ENCODE measurements at regions of chr22 and their contacts with region 1.

Region 1: GRCh38 chr22:30968924-30969539 is at the start of gene TUG1:
- DNase-seq: peak; percentile 97 to 99 (median 98)
- H3K4me3 ChIP-seq: peak within 1 kb of the TSS; percentile 62 to 98 (median 89)
- H3K27ac ChIP-seq: peak within 1 kb of the TSS; percentile 82 to 99 (median 94)
- H3K27me3 ChIP-seq: no peaks in the 10 kb centered on the region
- CTCF ChIP-seq: peak in 25 of 56 donors; percentile 6 to 54 (median 25)
- total RNA-seq, gene TUG1: 56.3 to 90.8 (median 71.5) TPM

Region 2: DNA sequence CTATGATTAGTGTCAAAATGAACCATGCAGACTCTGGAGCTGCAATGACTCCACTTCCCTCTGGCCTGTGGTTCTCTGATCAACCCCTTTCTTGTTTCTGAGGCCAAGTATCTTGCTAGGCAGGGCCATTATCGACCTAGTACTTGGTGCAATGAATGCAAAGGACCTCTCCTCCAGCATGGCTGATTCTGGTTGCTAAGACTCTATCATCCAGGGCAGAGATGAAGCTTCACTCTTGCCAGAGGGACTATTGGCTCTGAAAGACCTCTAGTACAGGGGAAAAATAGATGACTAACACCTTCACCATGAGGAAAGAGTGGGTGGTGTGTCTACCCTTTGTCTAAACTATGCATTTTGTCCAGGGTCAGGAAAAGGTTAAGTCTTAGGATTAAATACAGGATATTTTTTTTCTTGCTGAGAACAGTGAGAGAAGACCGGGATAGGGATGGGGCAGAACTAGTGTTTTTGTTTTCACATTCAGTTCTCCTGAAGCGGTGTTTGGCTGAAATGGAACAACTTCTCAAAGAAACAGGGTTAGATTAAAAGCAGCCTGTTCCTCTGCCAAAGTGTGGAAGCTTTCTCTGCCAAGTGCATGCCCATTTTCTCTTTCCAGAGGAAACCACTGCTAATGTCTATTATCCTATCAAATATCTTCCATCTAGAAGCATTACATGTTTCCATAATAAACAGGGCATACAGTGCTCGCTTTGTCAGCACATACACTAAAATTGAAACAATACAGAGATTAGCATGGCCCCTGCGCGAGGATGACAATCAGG is 548.5 kb before region 1 on chr22:
- intact Hi-C with region 1: no loop called
- DNase-seq: no peak
- H3K4me3 ChIP-seq: no peak overlapping the region
- H3K27ac ChIP-seq: peak overlapping the region in 57 of 59 donors; percentile 2 to 100 (median 75)
- H3K27me3 ChIP-seq: no peaks in the 10 kb centered on the region
- CTCF ChIP-seq: no peak

Region 3: DNA sequence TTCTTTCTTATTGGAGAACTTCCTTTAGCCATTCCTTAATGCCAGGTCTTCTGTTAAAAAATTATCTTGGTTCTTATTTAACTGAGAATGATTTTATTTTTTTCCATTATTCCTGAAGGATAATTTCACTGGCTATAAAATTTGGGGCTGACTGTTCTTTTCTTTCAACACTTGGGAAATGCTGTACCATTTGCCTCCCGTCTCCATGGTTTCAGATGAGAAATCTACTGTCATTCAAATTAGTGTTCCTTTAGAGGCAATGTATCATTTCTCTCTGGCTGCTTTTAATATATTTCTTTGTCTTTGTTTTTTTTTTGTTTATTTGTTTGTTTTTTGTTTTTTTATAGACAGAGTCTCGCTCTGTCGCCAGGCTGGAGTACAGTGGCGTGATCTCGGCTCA is 60.2 kb after region 1 on chr22:
- intact Hi-C with region 1: no loop called
- DNase-seq: no peak
- H3K4me3 ChIP-seq: no peak overlapping the region
- H3K27ac ChIP-seq: no peak overlapping the region
- H3K27me3 ChIP-seq: no peaks in the 10 kb centered on the region
- CTCF ChIP-seq: no peak

Region 4: GRCh38 chr22:31080848-31081649 is 112.0 kb after region 1 on chr22 and contains the start of gene SMTN:
- intact Hi-C with region 1: loop called in 1 of 2 experiments (anchors 2 kb)
- DNase-seq: peak; percentile 56 to 84 (median 68)
- H3K4me3 ChIP-seq: peak within 1 kb of the TSS; percentile 34 to 87 (median 59)
- H3K27ac ChIP-seq: peak within 1 kb of the TSS in 43 of 59 donors; percentile 1 to 99 (median 47)
- H3K27me3 ChIP-seq: peaks cover 0 to 5% (median 0%) of the 10 kb centered on the region in 45 donors
- CTCF ChIP-seq: no peak
- total RNA-seq, gene SMTN: 12.5 to 186 (median 28.4) TPM

Region 5: DNA sequence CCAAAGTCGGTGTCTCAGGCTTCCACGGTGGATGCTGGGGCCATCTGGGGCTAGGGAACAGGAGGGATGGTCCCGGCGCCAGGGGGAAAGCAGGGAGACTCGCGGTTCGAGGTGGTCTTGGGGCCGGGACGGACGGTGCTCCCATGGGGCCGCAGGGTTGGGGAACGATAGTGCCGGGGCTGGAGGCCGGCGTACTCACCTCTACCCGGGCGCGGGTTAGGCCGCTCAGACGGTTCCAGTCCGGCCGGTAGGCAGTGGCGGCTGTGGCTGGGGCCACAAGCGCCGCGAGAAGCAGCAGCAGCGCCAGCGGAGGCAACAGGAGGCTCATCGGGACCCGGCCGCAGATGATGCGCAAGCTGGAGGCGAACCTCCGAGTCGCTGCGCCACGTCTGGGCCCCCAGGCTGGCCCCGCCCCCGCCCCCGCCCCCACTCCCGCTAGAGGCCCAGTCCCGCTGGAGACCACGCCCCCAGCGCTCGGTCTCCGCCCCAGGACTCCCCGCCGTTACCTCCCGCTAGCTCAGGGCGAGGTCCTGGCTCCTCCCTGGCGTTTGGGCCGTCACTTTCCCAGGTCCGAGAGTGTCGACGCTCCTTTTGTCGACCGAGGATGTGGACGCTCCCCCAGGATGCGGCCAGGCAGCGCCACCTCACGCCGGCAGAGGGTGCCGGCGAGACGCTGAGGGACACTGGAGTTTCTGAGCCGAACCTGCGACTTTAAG is 138.3 kb after region 1 on chr22 and contains the start of gene SELENOM:
- intact Hi-C with region 1: loop called in 1 of 2 experiments (anchors 5 kb)
- DNase-seq: peak; percentile 82 to 97 (median 93)
- H3K4me3 ChIP-seq: peak within 1 kb of the TSS; percentile 59 to 97 (median 88)
- H3K27ac ChIP-seq: peak within 1 kb of the TSS; percentile 7 to 97 (median 92)
- H3K27me3 ChIP-seq: no peaks in the 10 kb centered on the region
- CTCF ChIP-seq: peak; percentile 44 to 97 (median 86)
- total RNA-seq, gene SELENOM: 76.0 to 161 (median 116) TPM

Region 6: DNA sequence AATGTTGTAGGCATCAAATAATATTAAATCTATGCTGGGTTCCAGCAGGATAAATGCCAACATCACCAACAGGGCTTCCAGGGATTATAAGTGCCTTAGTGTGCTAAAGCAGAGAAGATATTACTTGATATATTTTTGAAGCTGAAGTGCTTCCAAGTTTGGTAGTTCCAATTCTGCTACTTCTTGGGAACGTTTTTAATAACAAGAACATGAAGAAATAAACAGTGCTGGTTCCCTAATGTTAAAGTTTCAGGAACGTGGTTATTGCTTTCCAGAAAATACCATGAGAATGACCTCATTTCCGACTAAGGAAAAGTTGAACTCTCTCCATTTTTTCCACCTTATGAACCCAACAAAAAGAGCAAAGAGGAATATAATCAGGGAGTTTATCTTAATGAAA is 186.4 kb after region 1 on chr22:
- intact Hi-C with region 1: loop called (anchors 5 to 10 kb)
- DNase-seq: no peak
- H3K4me3 ChIP-seq: no peak overlapping the region
- H3K27ac ChIP-seq: peak overlapping the region in 39 of 59 donors; percentile 0 to 78 (median 46)
- H3K27me3 ChIP-seq: no peaks in the 10 kb centered on the region
- CTCF ChIP-seq: no peak

Measured in dorsolateral prefrontal cortex (tissue), 120 donors.